CD4-positive, alpha-beta T cell (primary cell): ENCODE measurements at regions of chr22 and their contacts with region 1.

Region 1: GRCh38 chr22:40346178-40347118 is at the start of gene ADSL:
- DNase-seq: peak; percentile 72 to 91 (median 80)
- ATAC-seq: peak; percentile 74
- H3K4me3 ChIP-seq: peak within 1 kb of the TSS; percentile 91
- H3K4me3 Mint-ChIP-seq: peak within 1 kb of the TSS; percentile 96
- H3K27ac ChIP-seq: peak within 1 kb of the TSS; percentile 81 to 89
- H3K27ac Mint-ChIP-seq: peak within 1 kb of the TSS; percentile 98
- H3K4me1 ChIP-seq: peaks cover 65% of the 10 kb centered on the region
- H3K4me1 Mint-ChIP-seq: peaks cover 52% of the 10 kb centered on the region
- H3K27me3 ChIP-seq: no peaks in the 10 kb centered on the region
- H3K27me3 Mint-ChIP-seq: no peaks in the 10 kb centered on the region
- CTCF ChIP-seq: no peak
- total RNA-seq, gene ADSL: 62.9 to 75.3 TPM

Region 2: DNA sequence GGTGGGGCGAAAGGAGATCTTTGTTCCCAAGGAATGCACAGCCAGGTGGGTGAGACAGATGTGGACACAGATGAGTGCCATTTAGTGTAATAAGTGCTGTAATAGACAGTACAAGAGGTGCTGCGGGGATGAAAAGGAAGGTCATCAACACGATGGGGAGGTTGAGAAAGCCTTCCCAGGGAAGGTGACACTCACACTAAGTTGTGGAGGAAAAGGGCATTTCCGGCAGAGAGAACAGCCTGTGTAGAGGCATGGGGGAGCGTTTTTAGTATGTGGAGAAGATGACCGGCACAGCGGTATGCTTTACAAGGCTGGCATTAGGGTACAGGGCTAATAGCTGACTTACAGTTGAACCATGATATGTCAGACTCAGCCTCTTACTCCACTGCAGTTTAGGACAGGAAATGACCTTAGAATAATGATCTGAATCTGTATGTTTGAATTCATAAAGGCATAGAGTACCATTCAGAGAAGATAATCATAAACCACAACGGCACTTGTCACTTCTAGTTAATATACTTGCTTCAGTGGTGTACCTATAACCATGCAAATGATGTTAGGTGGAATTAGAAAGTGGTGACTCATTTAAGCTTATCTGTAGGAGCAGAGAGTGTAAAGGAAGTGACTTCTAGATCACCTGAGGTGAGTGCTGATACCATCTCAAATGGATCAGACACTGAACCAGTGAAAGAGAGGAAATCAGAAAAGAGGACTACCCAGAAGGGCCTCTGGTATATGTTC is 291.1 kb before region 1 on chr22:
- CTCF ChIA-PET with region 1: interaction called, 12 read pairs
- POLR2A ChIA-PET with region 1: interaction called, 4 read pairs
- intact Hi-C with region 1: loop called in 1 of 2 experiments (anchors 5 kb)
- DNase-seq: peak in 4 of 14 experiments; percentile 23 to 80 (median 74)
- ATAC-seq: peak; percentile 95
- H3K4me3 ChIP-seq: peak overlapping the region; percentile 17
- H3K4me3 Mint-ChIP-seq: peak overlapping the region; percentile 57
- H3K27ac ChIP-seq: peak overlapping the region; percentile 72 to 86
- H3K27ac Mint-ChIP-seq: peak overlapping the region; percentile 82
- H3K4me1 ChIP-seq: peaks cover 71% of the 10 kb centered on the region
- H3K4me1 Mint-ChIP-seq: peaks cover 82% of the 10 kb centered on the region
- H3K27me3 ChIP-seq: no peaks in the 10 kb centered on the region
- H3K27me3 Mint-ChIP-seq: no peaks in the 10 kb centered on the region
- CTCF ChIP-seq: no peak

Region 3: GRCh38 chr22:40193429-40194421 is 152.7 kb before region 1 on chr22:
- CTCF ChIA-PET with region 1: interaction called, 10 read pairs
- POLR2A ChIA-PET with region 1: interaction called, 3 read pairs
- intact Hi-C with region 1: no loop called
- DNase-seq: peak in 3 of 14 experiments; percentile 31 to 45 (median 40)
- ATAC-seq: peak; percentile 61
- H3K4me3 ChIP-seq: no peak overlapping the region
- H3K4me3 Mint-ChIP-seq: peak overlapping the region; percentile 7
- H3K27ac ChIP-seq: no peak overlapping the region
- H3K27ac Mint-ChIP-seq: peak overlapping the region; percentile 75
- H3K4me1 ChIP-seq: peaks cover 70% of the 10 kb centered on the region
- H3K4me1 Mint-ChIP-seq: peaks cover 83% of the 10 kb centered on the region
- H3K27me3 ChIP-seq: no peaks in the 10 kb centered on the region
- H3K27me3 Mint-ChIP-seq: no peaks in the 10 kb centered on the region
- CTCF ChIP-seq: no peak

Region 4: GRCh38 chr22:40270748-40271373 is 75.6 kb before region 1 on chr22:
- CTCF ChIA-PET with region 1: interaction called, 10 read pairs
- POLR2A ChIA-PET with region 1: interaction called, 5 read pairs
- intact Hi-C with region 1: loop called in 1 of 2 experiments (anchors 5 kb)
- DNase-seq: no peak
- ATAC-seq: no peak
- H3K4me3 ChIP-seq: no peak overlapping the region
- H3K4me3 Mint-ChIP-seq: no peak overlapping the region
- H3K27ac ChIP-seq: no peak overlapping the region
- H3K27ac Mint-ChIP-seq: peak overlapping the region; percentile 92
- H3K4me1 ChIP-seq: peaks cover 14% of the 10 kb centered on the region
- H3K4me1 Mint-ChIP-seq: peaks cover 57% of the 10 kb centered on the region
- H3K27me3 ChIP-seq: no peaks in the 10 kb centered on the region
- H3K27me3 Mint-ChIP-seq: no peaks in the 10 kb centered on the region
- CTCF ChIP-seq: no peak

Region 5: GRCh38 chr22:40308999-40309573 is 37.4 kb before region 1 on chr22:
- CTCF ChIA-PET with region 1: interaction called, 10 read pairs
- POLR2A ChIA-PET with region 1: interaction called, 9 read pairs
- intact Hi-C with region 1: loop called in 1 of 2 experiments (anchors 5 kb)
- DNase-seq: no peak
- ATAC-seq: no peak
- H3K4me3 ChIP-seq: no peak overlapping the region
- H3K4me3 Mint-ChIP-seq: peak overlapping the region; percentile 22
- H3K27ac ChIP-seq: no peak overlapping the region
- H3K27ac Mint-ChIP-seq: peak overlapping the region; percentile 67
- H3K4me1 ChIP-seq: peaks cover 14% of the 10 kb centered on the region
- H3K4me1 Mint-ChIP-seq: peaks cover 49% of the 10 kb centered on the region
- H3K27me3 ChIP-seq: no peaks in the 10 kb centered on the region
- H3K27me3 Mint-ChIP-seq: no peaks in the 10 kb centered on the region
- CTCF ChIP-seq: no peak